ENCODE measurements at regions of chr4 and their contacts with region 1.

Region 1: DNA sequence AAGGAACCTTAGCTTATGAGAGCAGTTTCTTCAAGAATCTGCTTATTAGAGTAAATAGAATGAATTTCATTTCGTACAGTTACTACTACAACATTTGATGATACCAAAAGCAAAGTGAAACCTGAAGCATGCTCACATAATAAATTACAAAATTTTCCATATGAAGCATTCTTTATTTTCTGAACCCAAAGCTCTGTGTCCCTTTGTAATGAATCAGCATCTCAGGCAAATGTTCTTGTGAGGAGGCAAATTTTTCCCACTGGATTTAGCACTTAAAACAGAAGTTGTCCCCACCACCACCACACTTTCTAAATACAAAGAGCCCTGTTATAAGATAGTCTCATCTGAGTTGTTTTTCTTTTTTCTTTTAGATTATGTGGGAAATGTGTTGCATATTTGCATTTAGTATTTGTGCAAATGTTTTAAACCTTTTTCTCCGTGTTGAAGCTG is 70.7 kb upstream of the NFKB1 start:
- DNase-seq: no peak
- ATAC-seq: no peak
- H3K4me3 Mint-ChIP-seq: peak overlapping the region; percentile 92
- H3K27ac Mint-ChIP-seq: peak overlapping the region; percentile 76
- H3K4me1 Mint-ChIP-seq: peaks cover 5% of the 10 kb centered on the region
- H3K27me3 Mint-ChIP-seq: no peaks in the 10 kb centered on the region
- CTCF ChIP-seq: no peak

Region 2: GRCh38 chr4:101835121-101835904 is 595.2 kb before region 1 on chr4:
- CTCF ChIA-PET with region 1: no interaction called
- POLR2A ChIA-PET with region 1: no interaction called
- intact Hi-C with region 1: loop called (anchors 5 kb)
- DNase-seq: no peak
- ATAC-seq: no peak
- H3K4me3 Mint-ChIP-seq: peak overlapping the region; percentile 9
- H3K27ac Mint-ChIP-seq: peak overlapping the region; percentile 84
- H3K4me1 Mint-ChIP-seq: peaks cover 84% of the 10 kb centered on the region
- H3K27me3 Mint-ChIP-seq: no peaks in the 10 kb centered on the region
- CTCF ChIP-seq: no peak

Region 3: GRCh38 chr4:101977076-101977475 is 453.4 kb before region 1 on chr4:
- CTCF ChIA-PET with region 1: no interaction called
- POLR2A ChIA-PET with region 1: no interaction called
- intact Hi-C with region 1: no loop called
- DNase-seq: no peak
- ATAC-seq: no peak
- H3K4me3 Mint-ChIP-seq: no peak overlapping the region
- H3K27ac Mint-ChIP-seq: peak overlapping the region; percentile 57
- H3K4me1 Mint-ChIP-seq: peaks cover 66% of the 10 kb centered on the region
- H3K27me3 Mint-ChIP-seq: no peaks in the 10 kb centered on the region
- CTCF ChIP-seq: no peak

Region 4: DNA sequence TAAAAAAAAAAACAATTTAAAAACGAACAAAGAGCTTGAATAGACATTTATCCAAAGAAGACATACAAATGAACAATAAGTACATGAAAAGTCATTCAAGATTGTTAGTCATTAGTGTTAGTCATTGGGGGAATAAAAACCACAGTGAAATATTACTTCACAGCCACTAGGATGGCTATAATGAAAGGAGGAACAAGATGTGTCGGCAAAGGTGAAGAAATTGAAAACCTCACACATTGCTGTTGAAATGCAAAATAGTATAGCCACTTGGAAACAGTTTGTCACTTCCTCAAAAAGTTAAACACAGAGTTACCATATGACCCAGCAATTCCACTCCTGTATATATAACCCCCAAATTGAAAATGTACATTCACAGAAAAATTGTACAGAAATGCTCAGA is 40.0 kb before region 1 on chr4:
- CTCF ChIA-PET with region 1: no interaction called
- POLR2A ChIA-PET with region 1: no interaction called
- intact Hi-C with region 1: loop called (anchors 1 kb)
- DNase-seq: no peak
- ATAC-seq: peak; percentile 91
- H3K4me3 Mint-ChIP-seq: no peak overlapping the region
- H3K27ac Mint-ChIP-seq: no peak overlapping the region
- H3K4me1 Mint-ChIP-seq: peaks cover 13% of the 10 kb centered on the region
- H3K27me3 Mint-ChIP-seq: peaks cover 12% of the 10 kb centered on the region
- CTCF ChIP-seq: no peak

Region 5: GRCh38 chr4:103008875-103009729 is 578.6 kb after region 1 on chr4:
- CTCF ChIA-PET with region 1: interaction called, 3 read pairs
- POLR2A ChIA-PET with region 1: no interaction called
- intact Hi-C with region 1: loop called (anchors 1 kb)
- DNase-seq: no peak
- ATAC-seq: peak; percentile 92
- H3K4me3 Mint-ChIP-seq: no peak overlapping the region
- H3K27ac Mint-ChIP-seq: no peak overlapping the region
- H3K4me1 Mint-ChIP-seq: no peaks in the 10 kb centered on the region
- H3K27me3 Mint-ChIP-seq: no peaks in the 10 kb centered on the region
- CTCF ChIP-seq: peak; percentile 68

Region 6: GRCh38 chr4:103198111-103198765 is 767.8 kb after region 1 on chr4 and contains the start of gene CENPE:
- CTCF ChIA-PET with region 1: no interaction called
- POLR2A ChIA-PET with region 1: no interaction called
- intact Hi-C with region 1: loop called (anchors 2 kb)
- DNase-seq: peak; percentile 83
- ATAC-seq: peak; percentile 94
- H3K4me3 Mint-ChIP-seq: peak within 1 kb of the TSS; percentile 93
- H3K27ac Mint-ChIP-seq: peak within 1 kb of the TSS; percentile 91
- H3K4me1 Mint-ChIP-seq: peaks cover 10% of the 10 kb centered on the region
- H3K27me3 Mint-ChIP-seq: no peaks in the 10 kb centered on the region
- CTCF ChIP-seq: no peak
- total RNA-seq, gene CENPE: 2.4 and 2.5 TPM in 2 replicates